ENCODE measurements at regions of chr14 and their contacts with region 1.

Region 1: DNA sequence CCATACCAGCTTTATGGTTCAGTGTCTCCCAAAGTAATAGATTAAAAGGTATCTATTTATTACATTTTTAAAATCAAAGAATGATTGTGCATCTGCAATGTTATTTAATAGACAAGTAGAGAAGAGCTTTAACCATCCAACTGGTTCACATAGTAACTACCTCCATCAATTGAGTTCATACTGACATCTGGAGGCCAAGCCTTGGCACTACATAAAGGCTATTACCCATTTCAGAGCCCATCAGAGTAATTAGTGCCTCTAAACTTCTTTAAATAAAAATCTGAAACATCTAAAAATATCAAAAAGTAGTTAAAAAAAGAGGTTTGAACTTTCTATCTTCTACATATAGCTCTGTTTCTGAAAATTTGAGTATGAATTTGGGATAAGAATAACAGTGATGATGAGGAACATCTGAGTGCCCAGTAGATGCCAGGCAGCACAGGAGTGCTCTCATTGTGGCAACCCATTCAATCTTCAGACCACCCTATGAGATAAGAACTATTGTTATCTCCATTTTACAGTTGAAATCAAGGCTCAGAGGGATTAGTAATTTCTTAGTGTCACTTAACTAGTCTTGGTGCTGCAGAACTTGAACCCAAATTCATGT is 132.9 kb upstream of the DAAM1 start:
- DNase-seq: peak; percentile 21 to 28
- ATAC-seq: peak; percentile 59 to 80; a peak in 4 of 6 replicates
- H3K4me3 ChIP-seq: no peak overlapping the region
- H3K27ac ChIP-seq: no peak overlapping the region
- H3K4me1 ChIP-seq: no peaks in the 10 kb centered on the region
- CTCF ChIP-seq: peak; percentile 63
- EP300 ChIP-seq: no peak
- POLR2A ChIP-seq: no peak
- RAD21 ChIP-seq: peak; percentile 66 to 70

Region 2: DNA sequence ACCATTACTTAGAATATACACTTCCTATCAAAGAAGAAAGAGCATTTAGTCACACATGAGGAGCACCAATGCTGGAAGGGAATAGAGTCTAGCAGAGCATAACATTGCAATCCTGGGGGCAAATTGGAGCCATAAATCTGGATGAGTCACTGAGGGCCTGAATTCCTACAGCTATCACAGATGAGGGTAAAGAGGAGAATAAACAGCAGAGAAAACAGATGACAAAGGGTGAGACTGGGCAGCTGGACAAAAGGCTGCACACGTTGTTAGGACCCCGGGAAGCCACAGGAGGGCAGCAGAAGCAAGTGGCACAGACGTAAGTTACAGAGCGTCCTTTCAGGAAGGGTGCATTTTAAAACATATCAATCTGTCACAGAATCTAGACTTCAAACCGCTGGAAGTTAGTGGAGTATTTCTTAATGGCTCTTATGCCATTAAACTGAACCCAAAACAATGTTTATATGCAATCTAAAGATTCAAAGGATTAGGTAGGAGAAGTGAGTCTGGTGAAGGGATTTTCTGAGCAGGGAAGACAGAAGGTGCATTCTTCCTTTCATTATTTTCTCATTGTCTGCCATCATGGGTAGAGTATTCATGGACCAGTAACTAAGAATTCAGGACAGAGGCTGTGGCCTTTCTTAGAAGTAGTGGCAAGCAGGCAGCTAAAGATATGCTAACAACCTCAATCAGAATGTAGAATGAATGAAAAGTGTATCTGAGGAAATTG is 26.9 kb before region 1 on chr14:
- CTCF ChIA-PET with region 1: interaction called, 18 read pairs
- POLR2A ChIA-PET with region 1: no interaction called
- DNase-seq: peak; percentile 37 to 68
- ATAC-seq: peak; percentile 97 to 100
- H3K4me3 ChIP-seq: no peak overlapping the region
- H3K27ac ChIP-seq: no peak overlapping the region
- H3K4me1 ChIP-seq: peaks cover 5% of the 10 kb centered on the region; the same call in 1 of the 3 replicates
- CTCF ChIP-seq: peak; percentile 90
- EP300 ChIP-seq: no peak
- POLR2A ChIP-seq: no peak
- RAD21 ChIP-seq: peak; percentile 88 to 89